CD14-positive monocyte (primary cell): ENCODE measurements at regions of chr19 and their contacts with region 1.

Region 1: DNA sequence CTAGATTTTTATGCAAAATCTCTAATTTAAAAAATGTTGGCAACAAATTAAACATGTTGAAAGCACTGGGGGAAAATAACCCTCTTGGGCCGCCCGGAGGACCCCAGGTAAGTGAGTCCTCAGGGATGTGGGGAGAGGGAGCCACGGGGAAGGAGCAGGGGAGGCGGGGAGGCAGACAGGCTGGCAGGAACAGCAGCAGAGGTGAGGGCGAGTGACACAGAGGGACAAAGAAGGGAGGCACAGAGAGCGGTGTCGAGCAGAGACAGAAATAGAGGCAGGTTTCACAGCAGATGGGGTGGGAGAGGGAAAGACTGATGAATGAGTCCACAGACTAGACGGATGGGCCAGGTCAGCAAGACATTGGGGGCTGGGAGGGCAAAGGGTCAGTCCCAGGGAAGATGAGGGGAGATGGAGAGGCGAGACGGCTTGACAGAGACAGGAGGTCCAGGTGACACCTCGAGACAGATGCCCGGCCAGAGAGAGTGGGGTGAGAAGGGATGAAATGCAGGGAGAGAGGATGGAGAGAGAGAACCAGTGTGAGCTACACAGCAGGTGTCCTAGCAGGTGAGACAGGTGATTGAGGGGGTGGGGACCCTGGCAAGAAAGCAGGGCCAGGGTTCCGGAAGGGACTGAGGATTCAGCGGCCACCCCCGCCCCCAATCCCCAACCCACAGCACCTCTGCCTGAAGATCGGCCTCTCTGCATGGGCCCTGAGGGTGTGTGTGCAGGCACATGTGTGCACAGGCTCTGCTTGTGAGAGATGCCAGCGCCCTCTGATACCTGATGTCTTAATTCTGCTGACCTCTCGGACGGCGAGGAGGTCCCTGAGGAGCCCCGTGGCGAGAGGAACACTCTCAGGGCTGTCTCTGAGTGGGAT is 3.8 kb downstream of the LRRC4B start:
- DNase-seq: no peak
- H3K4me3 ChIP-seq: no peak overlapping the region
- H3K4me3 Mint-ChIP-seq: peak overlapping the region in 1 of 2 donors; percentile 81
- H3K27ac ChIP-seq: no peak overlapping the region
- H3K27ac Mint-ChIP-seq: no peak overlapping the region
- H3K4me1 ChIP-seq: no peaks in the 10 kb centered on the region
- H3K4me1 Mint-ChIP-seq: no peaks in the 10 kb centered on the region
- H3K27me3 ChIP-seq: peaks cover 19 to 45% of the 10 kb centered on the region in 2 donors
- H3K27me3 Mint-ChIP-seq: peaks cover 47 to 70% (median 63%) of the 10 kb centered on the region in 3 donors
- CTCF ChIP-seq: no peak

Region 2: DNA sequence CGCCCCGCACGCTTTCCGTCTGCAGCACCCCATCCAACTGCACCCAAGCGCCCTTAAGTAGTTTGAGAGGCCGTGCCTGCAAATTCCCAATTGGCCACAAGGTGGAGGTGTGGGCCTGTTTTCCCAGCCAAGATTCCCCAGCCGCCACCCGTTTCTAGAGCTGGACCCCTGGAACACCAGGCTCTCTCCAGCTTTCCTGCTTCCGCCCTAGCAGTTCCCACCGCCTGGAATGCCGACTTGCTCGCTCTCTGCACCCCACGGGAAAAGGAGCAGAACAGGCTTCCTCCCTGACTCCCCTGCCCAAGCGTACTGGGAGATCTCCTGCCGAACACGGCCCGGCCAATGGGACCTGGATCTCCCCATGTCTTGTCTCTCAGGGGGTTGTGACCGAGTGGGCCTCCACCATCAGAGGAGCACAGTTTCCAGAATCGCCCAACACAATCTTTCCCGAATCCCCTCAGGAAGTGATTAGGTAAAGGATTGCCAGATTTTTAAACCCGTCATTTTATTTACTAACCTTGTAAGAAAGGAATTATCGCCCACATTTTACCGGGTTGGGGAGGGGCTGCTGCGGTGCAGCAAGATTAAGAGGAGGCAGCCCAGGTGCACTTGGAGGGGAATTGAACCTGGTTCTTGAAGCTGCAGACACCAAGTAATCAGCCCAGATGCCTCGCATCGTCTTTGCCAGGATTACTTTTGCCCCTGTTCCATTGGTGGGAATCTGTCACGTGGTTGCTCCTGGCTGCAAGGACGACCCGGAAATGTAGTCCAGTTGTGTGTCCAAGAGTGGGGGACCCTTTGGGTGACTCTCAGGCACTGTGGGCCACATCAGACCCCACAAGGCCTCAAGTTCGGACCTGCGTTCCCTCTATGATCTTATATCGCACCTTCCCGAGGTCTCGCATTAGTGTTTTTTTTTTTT is 195.6 kb before region 1 on chr19:
- intact Hi-C with region 1: loop called in 1 of 2 experiments (anchors 5 kb)
- DNase-seq: peak; percentile 70 to 87 (median 87)
- H3K4me3 ChIP-seq: peak overlapping the region; percentile 53 to 90 (median 67)
- H3K4me3 Mint-ChIP-seq: peak overlapping the region; percentile 96 to 99
- H3K27ac ChIP-seq: peak overlapping the region; percentile 6 to 79
- H3K27ac Mint-ChIP-seq: peak overlapping the region; percentile 77 to 98 (median 91)
- H3K4me1 ChIP-seq: peaks cover 26 to 29% of the 10 kb centered on the region in 2 donors
- H3K4me1 Mint-ChIP-seq: peaks cover 29% of the 10 kb centered on the region
- H3K27me3 ChIP-seq: no peaks in the 10 kb centered on the region
- H3K27me3 Mint-ChIP-seq: peaks cover 0 to 8% (median 2%) of the 10 kb centered on the region in 3 donors
- CTCF ChIP-seq: peak; percentile 93

Region 3: DNA sequence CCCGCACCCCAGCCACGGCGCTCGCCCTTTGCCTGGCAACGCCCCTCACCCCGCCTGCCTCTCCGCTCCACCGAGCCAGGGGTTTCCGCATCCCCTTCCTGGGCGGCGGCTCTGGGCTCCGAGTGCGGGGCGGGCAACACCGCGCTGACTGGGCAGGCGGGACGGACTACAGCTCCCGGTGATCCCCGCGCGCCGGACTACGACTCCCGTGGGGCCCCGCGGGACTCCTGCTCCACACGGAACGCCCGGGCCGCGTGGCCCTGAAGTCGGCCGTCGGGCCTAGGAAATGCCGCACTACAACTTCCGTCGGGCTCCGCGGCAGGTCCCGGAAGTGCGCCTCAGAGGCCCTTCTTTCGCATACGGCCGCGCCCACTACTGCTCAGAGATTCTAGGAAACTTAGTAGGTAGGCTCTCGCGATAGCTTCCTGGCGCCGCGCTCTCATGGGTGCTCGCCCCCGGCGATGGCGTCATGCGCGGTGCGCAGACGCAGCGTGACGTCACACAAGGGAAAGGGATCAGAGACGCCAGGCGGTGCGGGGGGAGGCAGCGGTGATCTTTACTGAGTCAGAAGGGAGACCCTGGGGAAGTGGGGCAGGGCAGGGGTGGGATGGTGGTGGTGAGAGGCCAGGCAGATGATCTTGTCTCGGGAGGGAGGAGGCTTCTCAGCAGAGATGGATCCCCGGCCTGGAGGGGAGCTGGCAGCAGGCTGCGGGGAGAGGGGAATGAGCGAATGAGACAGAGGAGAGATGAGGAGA is 53.2 kb before region 1 on chr19 and contains the start of gene JOSD2:
- intact Hi-C with region 1: no loop called
- DNase-seq: peak; percentile 99 to 100 (median 100)
- H3K4me3 ChIP-seq: peak within 1 kb of the TSS; percentile 77 to 91 (median 83)
- H3K4me3 Mint-ChIP-seq: peak within 1 kb of the TSS; percentile 90 to 95
- H3K27ac ChIP-seq: peak within 1 kb of the TSS; percentile 72 to 91
- H3K27ac Mint-ChIP-seq: peak within 1 kb of the TSS; percentile 92 to 97 (median 96)
- H3K4me1 ChIP-seq: peaks cover 11 to 16% of the 10 kb centered on the region in 2 donors
- H3K4me1 Mint-ChIP-seq: peaks cover 15% of the 10 kb centered on the region
- H3K27me3 ChIP-seq: peaks cover 0 to 6% of the 10 kb centered on the region in 2 donors
- H3K27me3 Mint-ChIP-seq: peaks cover 13 to 30% (median 21%) of the 10 kb centered on the region in 3 donors
- CTCF ChIP-seq: no peak
- polyA plus RNA-seq, gene JOSD2: 33.0 to 43.0 (median 37.2) TPM

Region 4: GRCh38 chr19:50531118-50531612 is 33.3 kb before region 1 on chr19:
- intact Hi-C with region 1: no loop called
- DNase-seq: no peak
- H3K4me3 ChIP-seq: no peak overlapping the region
- H3K4me3 Mint-ChIP-seq: no peak overlapping the region
- H3K27ac ChIP-seq: no peak overlapping the region
- H3K27ac Mint-ChIP-seq: no peak overlapping the region
- H3K4me1 ChIP-seq: no peaks in the 10 kb centered on the region
- H3K4me1 Mint-ChIP-seq: no peaks in the 10 kb centered on the region
- H3K27me3 ChIP-seq: no peaks in the 10 kb centered on the region
- H3K27me3 Mint-ChIP-seq: peaks cover 9 to 23% (median 12%) of the 10 kb centered on the region in 3 donors
- CTCF ChIP-seq: no peak